ENCODE measurements at regions of chr14 and their contacts with region 1.

Region 1: DNA sequence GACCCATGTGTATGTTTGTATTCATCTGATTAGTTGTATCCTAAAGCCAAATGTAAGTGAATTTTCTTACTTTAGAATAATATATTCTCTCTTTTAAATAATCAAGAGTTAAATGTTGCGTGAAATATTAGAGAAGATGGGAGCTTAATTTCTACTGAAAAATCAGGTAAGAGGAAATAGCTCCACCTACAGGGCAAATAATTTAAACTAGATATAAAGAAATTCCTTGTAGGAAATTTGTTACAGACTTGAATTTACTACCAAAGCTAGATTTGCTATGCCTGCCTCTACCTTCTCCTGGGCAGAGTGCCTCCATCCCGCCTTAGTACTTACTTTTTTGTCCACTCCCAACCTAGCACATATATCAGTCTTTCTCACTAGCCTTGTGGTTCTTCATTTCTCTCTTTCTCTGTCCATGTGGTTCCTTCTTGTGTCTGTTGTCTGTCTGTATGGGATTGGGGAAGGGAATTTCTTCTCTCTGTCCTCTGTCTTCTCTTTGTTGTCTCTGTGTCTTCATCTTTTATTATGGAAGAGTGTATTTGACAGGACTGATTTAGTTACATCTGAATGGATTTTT is 44.7 kb downstream of the PALS1 start:
- DNase-seq: no peak
- ATAC-seq: no peak
- H3K4me3 Mint-ChIP-seq: no peak overlapping the region
- H3K27ac Mint-ChIP-seq: peak overlapping the region; percentile 25; the same call in 1 of the 2 replicates
- H3K4me1 Mint-ChIP-seq: no peaks in the 10 kb centered on the region
- H3K27me3 Mint-ChIP-seq: no peaks in the 10 kb centered on the region
- CTCF ChIP-seq: no peak

Region 2: GRCh38 chr14:67166450-67166853 is 119.5 kb before region 1 on chr14:
- CTCF ChIA-PET with region 1: interaction called, 59 read pairs
- POLR2A ChIA-PET with region 1: no interaction called
- DNase-seq: peak; percentile 28
- ATAC-seq: peak; percentile 59
- H3K4me3 Mint-ChIP-seq: no peak overlapping the region
- H3K27ac Mint-ChIP-seq: no peak overlapping the region
- H3K4me1 Mint-ChIP-seq: 0 out of 2 replicates have a peak, but pooled peaks cover 7% of the 10 kb centered on the region
- H3K27me3 Mint-ChIP-seq: no peaks in the 10 kb centered on the region
- CTCF ChIP-seq: 0 out of 2 replicates have a peak, but pooled peaks have one; percentile 40

Region 3: GRCh38 chr14:67232081-67232480 is 53.9 kb before region 1 on chr14:
- CTCF ChIA-PET with region 1: interaction called, 11 read pairs
- POLR2A ChIA-PET with region 1: interaction called, 5 read pairs
- DNase-seq: no peak
- ATAC-seq: 0 out of 2 replicates have a peak, but pooled peaks have one; percentile 18
- H3K4me3 Mint-ChIP-seq: no peak overlapping the region
- H3K27ac Mint-ChIP-seq: no peak overlapping the region
- H3K4me1 Mint-ChIP-seq: no peaks in the 10 kb centered on the region
- H3K27me3 Mint-ChIP-seq: peaks cover 2% of the 10 kb centered on the region
- CTCF ChIP-seq: no peak

Region 4: DNA sequence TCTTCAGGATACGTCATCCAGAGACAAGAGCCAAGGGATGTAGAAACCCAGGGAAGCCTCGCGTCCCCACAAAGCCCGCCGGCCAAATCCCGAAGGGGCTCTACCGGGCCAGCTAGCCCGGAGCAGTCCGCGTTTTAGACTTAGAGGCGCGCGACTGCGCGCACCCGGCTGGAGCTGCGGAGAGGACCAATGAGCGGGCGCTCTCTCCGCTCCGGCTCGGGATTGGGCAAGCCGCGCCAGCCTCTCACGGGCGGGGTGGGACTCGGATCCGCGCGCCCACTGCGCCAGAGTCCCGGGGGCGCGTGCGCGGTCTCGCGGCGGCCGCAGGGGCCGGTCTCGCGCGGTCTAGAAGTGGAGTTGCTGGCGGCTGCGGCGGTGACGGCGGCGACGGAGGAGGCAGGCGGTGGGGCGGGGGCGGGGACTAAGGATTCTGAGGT is 45.0 kb before region 1 on chr14:
- CTCF ChIA-PET with region 1: interaction called, 10 read pairs
- POLR2A ChIA-PET with region 1: interaction called, 3 read pairs
- DNase-seq: peak; percentile 95
- ATAC-seq: peak; percentile 93
- H3K4me3 Mint-ChIP-seq: peak overlapping the region; percentile 89
- H3K27ac Mint-ChIP-seq: peak overlapping the region; percentile 84
- H3K4me1 Mint-ChIP-seq: peaks cover 21% of the 10 kb centered on the region
- H3K27me3 Mint-ChIP-seq: peaks cover 26% of the 10 kb centered on the region
- CTCF ChIP-seq: no peak

Region 5: DNA sequence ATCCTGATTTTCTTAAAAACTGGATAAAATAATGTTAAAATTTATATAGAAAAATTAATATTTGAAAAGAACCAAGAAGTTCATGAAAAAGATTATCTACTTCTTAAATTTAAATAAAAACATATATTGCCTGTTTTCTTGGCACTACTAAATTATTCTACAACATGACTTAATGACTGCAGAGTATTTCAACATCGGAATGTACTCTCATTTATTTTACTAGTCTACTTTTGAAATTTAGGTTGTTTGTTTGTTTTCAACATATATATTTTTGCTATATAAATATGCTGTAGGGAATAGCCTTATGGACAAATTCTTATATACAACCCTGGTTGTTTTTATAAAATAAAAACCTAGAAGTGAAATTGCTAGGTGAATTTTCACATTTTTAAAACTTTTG is 765.2 kb after region 1 on chr14:
- CTCF ChIA-PET with region 1: no interaction called
- POLR2A ChIA-PET with region 1: no interaction called
- DNase-seq: no peak
- ATAC-seq: no peak
- H3K4me3 Mint-ChIP-seq: no peak overlapping the region
- H3K27ac Mint-ChIP-seq: no peak overlapping the region
- H3K4me1 Mint-ChIP-seq: no peaks in the 10 kb centered on the region
- H3K27me3 Mint-ChIP-seq: no peaks in the 10 kb centered on the region
- CTCF ChIP-seq: no peak

Measured in WTC11 (cell line).